KBM-7 (cell line): ENCODE measurements at regions of chr17 and their contacts with region 1.

Region 1: DNA sequence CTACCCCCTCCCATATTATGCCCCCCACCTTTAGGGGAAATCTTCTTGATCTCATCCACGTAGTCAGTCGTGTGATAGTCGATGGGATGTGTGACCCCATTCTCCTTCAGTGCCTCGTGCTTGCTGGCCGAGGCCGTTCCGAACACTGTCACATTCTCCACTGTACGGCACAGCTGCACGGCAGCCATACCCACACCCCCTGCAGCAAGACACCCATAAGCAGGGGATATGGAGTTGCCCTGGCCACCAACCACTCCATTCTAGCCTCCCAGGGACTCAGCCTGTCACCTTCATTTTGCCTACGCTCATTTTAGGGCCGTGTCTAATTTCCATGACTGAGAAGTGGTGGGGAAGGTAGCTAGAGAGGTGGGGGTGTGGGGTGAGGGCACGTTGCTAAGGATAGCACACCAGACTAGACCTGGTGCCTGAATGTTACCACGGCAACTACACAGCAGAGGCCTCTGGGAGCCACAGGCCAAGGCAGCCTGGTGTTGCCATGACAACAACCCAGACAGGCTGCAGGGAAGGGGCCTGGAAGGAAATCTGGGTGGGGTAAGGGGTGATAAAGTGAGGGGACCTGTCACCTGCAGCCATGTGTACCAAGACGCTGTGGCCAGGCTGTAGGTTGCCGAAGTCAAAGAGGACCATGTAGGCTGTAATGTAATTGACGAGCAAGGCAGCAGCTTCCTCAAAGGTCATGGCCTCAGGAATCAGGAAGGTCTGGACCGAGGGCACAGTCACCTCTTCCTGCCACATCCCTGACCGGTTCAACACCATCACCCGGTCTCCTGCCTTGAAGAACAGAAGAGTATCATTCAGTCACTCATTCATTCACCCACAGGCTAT is 4.0 kb downstream of the VAT1 start:
- DNase-seq: peak; percentile 44

Region 2: DNA sequence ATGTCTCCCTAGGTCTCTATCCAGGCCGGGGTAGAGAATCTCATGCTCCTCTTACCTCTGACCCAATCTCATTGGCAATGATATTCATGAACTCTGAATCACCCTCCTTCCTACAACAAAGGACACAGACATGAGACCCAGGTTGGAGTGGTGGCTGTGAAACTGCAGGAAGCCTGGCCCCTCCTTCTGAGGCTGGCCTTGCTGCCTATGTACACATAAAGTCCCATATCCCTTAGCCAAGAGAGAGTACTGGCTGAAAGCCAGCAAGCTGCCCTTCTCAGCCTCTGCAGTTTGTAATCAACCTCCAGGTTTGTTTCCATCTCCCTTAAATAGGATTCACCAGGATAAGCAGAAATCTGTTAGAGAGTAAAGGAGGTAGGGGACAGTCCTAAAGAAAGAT is 64.6 kb before region 1 on chr17:
- in situ Hi-C with region 1: loop called (anchors 10 kb)
- DNase-seq: no peak